Activated CD4-positive, alpha-beta memory T cell treated with anti-CD3 and anti-CD28 coated beads, Interleukin-2, amount 10 ng/mL, durations not matched to agents 7 days and 5 days (primary cell): ENCODE measurements at regions of chr3 and their contacts with region 1.

Region 1: GRCh38 chr3:32143849-32144757 is 37.7 kb downstream of the GPD1L start:
- DNase-seq: peak; percentile 44
- H3K4me3 Mint-ChIP-seq: no peak overlapping the region
- H3K27ac Mint-ChIP-seq: no peak overlapping the region
- H3K4me1 Mint-ChIP-seq: peaks cover 16% of the 10 kb centered on the region
- H3K27me3 Mint-ChIP-seq: no peaks in the 10 kb centered on the region

Region 2: DNA sequence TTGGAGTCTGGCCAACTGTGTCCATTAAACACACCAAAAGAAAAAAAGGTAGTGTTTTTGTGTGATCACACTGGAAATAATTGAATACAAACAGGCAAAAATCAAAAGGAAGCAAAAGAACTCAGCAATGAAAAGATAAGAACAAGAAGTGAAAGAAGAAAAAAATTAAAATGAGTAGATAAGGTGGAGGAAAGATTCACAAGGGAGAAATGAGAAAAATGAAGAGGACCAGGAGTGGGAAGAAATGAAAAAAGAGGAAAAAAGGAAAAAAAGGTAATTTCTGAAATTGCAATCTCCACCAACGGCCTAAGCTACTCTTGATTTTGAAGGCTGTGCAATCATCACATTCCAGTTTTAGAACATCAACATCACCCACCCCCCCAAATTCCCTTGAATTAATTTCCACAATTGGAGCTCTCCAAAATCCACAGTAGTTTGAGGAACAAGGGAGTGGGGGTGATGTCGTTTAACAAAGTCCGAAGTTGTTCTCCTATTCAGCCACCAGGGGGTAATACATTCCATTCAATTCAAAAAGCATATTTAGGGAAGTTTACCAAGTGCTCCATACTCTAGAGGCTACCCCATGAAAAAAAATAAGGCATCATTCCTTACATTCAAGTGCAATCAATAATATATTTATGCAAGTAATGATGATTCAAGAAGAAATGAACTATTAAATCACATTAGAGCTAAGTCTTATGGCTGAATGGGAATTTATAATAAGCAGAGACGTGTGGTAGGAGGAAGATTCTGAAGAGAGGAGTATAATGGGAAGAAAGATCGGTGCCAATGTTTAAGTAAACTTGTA is 125.1 kb before region 1 on chr3:
- CTCF ChIA-PET with region 1: interaction called, 56 read pairs
- POLR2A ChIA-PET with region 1: interaction called, 3 read pairs
- DNase-seq: no peak
- H3K4me3 Mint-ChIP-seq: no peak overlapping the region
- H3K27ac Mint-ChIP-seq: no peak overlapping the region
- H3K4me1 Mint-ChIP-seq: no peaks in the 10 kb centered on the region
- H3K27me3 Mint-ChIP-seq: peaks cover 10% of the 10 kb centered on the region